Right cardiac atrium (tissue), 5 donors: ENCODE measurements at regions of chrX and their contacts with region 1.

Region 1: DNA sequence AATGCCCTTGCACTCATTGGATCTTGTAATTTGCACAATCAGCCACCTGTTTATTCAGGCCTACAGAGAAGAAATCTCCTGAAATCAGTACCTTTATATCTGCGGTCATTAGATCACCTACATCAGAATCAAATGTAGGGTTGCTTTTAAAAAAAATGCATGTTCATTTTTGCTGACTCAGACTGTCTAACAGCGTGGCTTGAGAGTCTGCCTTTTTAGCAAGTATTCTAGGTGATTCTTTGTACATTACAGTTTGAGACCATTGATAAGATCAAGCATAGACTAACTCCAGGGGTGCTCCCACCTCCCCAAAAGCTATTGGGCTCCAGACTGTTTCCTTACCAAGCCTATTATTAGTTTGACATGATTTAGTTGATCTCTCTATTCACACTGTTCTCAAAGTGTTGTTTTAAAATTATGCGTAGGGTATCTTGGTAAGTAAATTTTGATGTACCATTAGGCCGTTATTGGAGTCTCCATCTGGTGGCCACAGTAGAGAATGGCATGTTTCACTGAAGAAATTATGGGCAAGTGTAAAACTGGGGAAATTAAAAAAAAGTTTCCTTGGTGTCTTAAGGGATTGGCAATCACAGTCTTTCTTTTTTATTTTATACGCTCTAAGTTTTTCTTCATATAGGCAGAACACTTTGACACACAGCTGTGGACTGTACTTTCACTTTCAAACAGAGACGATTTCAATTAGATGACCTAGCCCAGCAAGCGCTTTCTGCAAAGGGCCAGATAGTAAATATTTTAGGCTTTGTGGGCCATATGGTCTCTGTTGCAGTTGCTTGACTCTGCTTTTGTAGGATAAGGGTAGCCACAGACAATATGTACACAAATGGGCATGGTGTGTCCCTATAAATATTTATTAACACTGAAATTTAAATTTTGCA is 33.7 kb upstream of the MSL3 start:
- DNase-seq: no peak
- ATAC-seq: no peak
- H3K4me3 ChIP-seq: no peak overlapping the region
- H3K27ac ChIP-seq: no peak overlapping the region
- H3K4me1 ChIP-seq: no peaks in the 10 kb centered on the region
- H3K27me3 ChIP-seq: no peaks in the 10 kb centered on the region

Region 2: DNA sequence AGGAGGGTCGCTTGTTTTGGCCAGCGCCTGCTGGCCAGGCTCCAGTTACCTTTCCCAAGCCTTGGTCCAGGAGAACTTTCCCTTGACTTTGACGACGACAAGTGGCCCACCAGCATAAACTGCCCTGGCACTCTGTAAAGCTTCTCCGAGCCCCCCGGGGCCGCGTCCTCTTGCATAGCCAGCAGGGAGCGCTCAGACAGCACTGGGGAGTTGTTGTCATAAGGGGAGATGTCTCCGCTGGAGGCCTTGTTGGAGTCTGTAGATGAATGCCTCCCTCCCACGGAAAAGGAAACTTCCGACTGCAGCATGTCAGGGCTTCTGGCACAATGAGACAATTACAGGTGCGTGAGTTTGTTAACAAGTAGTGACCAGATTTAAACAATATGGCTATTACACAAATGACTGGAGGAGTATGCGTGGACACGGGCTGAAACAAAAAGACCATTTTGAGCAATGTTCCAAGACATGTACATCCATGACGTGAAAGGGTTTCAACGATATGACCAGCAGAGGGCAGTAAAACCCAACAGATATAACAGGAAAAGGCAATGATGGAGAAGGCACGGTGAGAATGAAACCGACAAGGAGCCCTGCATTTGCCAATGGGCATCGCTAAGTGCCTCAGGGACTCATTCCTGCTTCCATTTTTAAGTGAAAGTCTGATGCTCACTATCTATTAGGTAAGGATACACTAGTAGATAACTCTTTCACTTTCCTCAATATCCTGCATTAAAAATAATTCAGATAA is 580.3 kb before region 1 on chrX:
- intact Hi-C with region 1: loop called in 1 of 4 experiments (anchors 10 kb)
- DNase-seq: peak in 2 of 3 donors; percentile 18 to 47
- ATAC-seq: peak; percentile 68 to 81
- H3K4me3 ChIP-seq: no peak overlapping the region
- H3K27ac ChIP-seq: no peak overlapping the region
- H3K4me1 ChIP-seq: no peaks in the 10 kb centered on the region
- H3K27me3 ChIP-seq: no peaks in the 10 kb centered on the region

Region 3: DNA sequence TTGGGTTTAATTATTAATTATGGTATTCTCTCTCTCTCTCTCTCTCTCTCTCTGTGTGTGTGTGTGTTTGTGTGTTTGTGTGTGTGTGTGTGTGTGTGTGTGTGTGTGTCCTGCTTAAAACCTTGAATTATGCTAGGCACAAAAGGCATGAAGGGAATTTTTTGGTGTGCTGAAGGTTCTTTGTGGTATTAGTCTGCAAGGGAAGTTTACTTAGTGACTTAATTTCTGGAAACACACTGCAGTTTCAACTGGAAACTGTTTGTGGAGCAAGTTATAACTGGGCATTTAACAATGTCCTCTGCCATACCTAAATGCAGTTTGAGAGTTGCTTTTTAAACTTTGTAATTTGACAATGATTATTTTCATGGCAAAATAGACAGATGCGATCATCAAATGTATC is 525.6 kb after region 1 on chrX:
- intact Hi-C with region 1: no loop called
- DNase-seq: no peak
- ATAC-seq: no peak
- H3K4me3 ChIP-seq: no peak overlapping the region
- H3K27ac ChIP-seq: no peak overlapping the region
- H3K4me1 ChIP-seq: no peaks in the 10 kb centered on the region
- H3K27me3 ChIP-seq: no peaks in the 10 kb centered on the region